Sigmoid colon (tissue), 7 donors: ENCODE measurements at regions of chr9 and their contacts with region 1.

Region 1: GRCh38 chr9:7976167-7976755 is 176.7 kb upstream of the DMAC1 start:
- DNase-seq: no peak
- H3K4me3 ChIP-seq: no peak overlapping the region
- H3K27ac ChIP-seq: no peak overlapping the region
- H3K4me1 ChIP-seq: no peaks in the 10 kb centered on the region
- H3K27me3 ChIP-seq: no peaks in the 10 kb centered on the region
- CTCF ChIP-seq: no peak
- EP300 ChIP-seq: no peak
- POLR2A ChIP-seq: no peak

Region 2: DNA sequence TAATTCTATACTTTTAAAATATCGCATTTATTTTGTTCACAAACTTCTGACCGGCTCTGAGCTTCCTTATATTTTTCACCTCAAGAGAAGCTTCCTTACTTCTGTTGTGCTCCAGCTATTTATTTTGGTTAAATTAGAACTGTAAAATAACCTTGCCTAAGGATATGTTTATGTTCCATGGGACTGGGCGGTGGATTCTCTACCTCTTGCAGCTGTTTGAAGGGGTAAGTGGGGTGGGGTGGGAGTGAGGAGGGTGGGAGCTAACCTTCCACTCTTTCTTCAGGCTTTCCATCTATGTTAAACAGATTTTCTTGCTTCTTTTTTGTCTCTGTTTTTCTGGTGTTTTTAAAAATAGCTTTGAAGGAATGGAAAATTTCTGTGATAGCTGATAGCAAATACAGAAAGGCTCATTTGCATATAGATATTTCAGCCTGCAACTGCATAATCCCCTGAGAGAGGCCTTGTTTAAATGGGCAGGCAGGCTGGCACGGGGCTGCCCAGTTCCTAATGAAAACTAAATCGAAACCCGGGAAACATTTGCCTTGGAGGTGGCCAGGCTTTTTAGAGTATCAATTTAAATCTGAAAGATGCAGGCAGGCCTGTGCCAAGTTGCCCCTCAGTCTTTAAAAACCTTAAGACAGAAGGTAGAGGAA is 54.6 kb before region 1 on chr9:
- intact Hi-C with region 1: no loop called
- DNase-seq: no peak
- H3K4me3 ChIP-seq: no peak overlapping the region
- H3K27ac ChIP-seq: no peak overlapping the region
- H3K4me1 ChIP-seq: no peaks in the 10 kb centered on the region
- H3K27me3 ChIP-seq: no peaks in the 10 kb centered on the region
- CTCF ChIP-seq: no peak
- EP300 ChIP-seq: no peak
- POLR2A ChIP-seq: no peak

Region 3: DNA sequence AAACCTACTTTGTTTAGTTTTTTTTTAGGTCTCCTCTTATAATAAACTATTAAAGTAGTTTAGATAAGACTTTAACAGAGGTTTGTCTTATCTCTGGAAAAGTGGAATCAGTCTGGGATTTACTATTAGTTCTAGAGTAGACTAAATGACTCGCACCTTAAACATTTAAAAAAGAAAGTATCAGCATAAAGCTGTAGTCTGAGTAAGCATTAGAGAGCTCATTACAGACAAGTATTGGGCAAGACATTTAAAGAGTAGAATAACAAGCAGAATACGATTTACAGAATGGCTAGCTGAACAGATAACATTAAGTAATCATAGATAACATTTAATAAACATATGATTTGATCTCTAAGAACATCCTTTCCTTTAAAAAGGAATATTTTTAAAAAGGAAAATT is 49.3 kb after region 1 on chr9:
- intact Hi-C with region 1: loop called (anchors 10 kb)
- DNase-seq: no peak
- H3K4me3 ChIP-seq: no peak overlapping the region
- H3K27ac ChIP-seq: no peak overlapping the region
- H3K4me1 ChIP-seq: no peaks in the 10 kb centered on the region
- H3K27me3 ChIP-seq: no peaks in the 10 kb centered on the region
- CTCF ChIP-seq: no peak
- EP300 ChIP-seq: no peak
- POLR2A ChIP-seq: no peak